ENCODE measurements at regions of chr3 and their contacts with region 1.

Region 1: DNA sequence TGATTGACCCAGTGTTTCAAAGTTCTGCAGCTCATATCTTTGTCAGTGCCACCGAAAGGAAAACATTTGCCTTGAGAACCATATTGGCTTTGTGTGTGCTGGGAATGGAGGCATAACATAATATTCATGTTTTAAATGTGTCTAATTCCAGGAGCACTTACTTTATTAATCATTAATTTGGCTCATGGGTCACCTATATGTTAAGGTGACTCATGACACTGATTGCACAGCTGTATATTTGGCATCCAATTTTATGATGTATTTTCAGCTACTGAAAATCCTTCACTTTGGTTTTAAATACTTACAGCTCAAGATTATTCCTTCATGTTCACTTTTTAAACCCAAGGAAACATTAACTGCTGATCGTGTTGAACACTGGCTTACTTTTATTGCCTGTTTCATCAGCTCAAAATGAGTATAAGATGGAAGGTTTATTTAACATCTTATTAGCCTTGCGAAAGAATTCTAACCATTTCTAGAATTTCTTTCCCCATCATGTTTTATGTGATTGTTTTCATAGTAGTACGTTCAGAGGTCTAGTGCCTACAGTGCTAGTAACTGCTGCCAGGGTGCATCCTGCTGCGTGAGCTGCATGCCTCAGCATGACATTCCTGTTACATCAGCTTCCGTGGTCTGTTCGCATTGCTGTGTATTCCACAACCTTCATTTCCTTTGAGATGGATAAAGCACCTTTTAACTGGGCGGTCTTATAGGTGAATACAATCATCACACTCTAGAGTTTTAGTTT is 63.7 kb downstream of the LRCH3 start:
- DNase-seq: peak in 1 of 2 experiments; percentile 65
- H3K4me3 ChIP-seq: peak overlapping the region in 1 of 4 experiments; percentile 19; a peak in 1 of 8 replicates
- H3K27ac ChIP-seq: peak overlapping the region; percentile 46; the same call in 1 of the 2 replicates
- H3K4me1 ChIP-seq: peaks cover 6 to 24% (median 19%) of the 10 kb centered on the region in 4 experiments
- H3K27me3 ChIP-seq: no peaks in the 10 kb centered on the region
- CTCF ChIP-seq: no peak
- EP300 ChIP-seq: peak in 1 of 2 experiments; percentile 94; a peak in 2 of 3 replicates
- POLR2A ChIP-seq: peak in 1 of 2 experiments; percentile 22; a peak in 1 of 3 replicates
- RAD21 ChIP-seq: 0 out of 4 replicates have a peak, but pooled peaks of 1 of the 2 experiments have one; percentile 6

Region 2: GRCh38 chr3:197866035-197866434 is 11.3 kb after region 1 on chr3:
- CTCF ChIA-PET with region 1: interaction called, 4 read pairs
- POLR2A ChIA-PET with region 1: interaction called, 13 read pairs
- DNase-seq: no peak
- H3K4me3 ChIP-seq: no peak overlapping the region
- H3K27ac ChIP-seq: no peak overlapping the region
- H3K4me1 ChIP-seq: peaks cover 0 to 4% (median 3%) of the 10 kb centered on the region in 4 experiments; a peak in 2 of 7 replicates
- H3K27me3 ChIP-seq: no peaks in the 10 kb centered on the region
- CTCF ChIP-seq: no peak
- EP300 ChIP-seq: no peak
- POLR2A ChIP-seq: no peak
- RAD21 ChIP-seq: no peak

Region 3: GRCh38 chr3:197880491-197881269 is 25.9 kb after region 1 on chr3:
- CTCF ChIA-PET with region 1: no interaction called
- POLR2A ChIA-PET with region 1: interaction called, 13 read pairs
- DNase-seq: no peak
- H3K4me3 ChIP-seq: peak overlapping the region in 2 of 4 experiments; percentile 19 to 24; a peak in 3 of 8 replicates
- H3K27ac ChIP-seq: no peak overlapping the region
- H3K4me1 ChIP-seq: peaks cover 4 to 14% (median 10%) of the 10 kb centered on the region in 4 experiments; a peak in 6 of 7 replicates
- H3K27me3 ChIP-seq: peaks cover 0 to 5% (median 2%) of the 10 kb centered on the region in 4 experiments; a peak in 2 of 7 replicates
- CTCF ChIP-seq: no peak
- EP300 ChIP-seq: no peak
- POLR2A ChIP-seq: no peak
- RAD21 ChIP-seq: no peak